ENCODE measurements at regions of chr2 and their contacts with region 1.

Region 1: DNA sequence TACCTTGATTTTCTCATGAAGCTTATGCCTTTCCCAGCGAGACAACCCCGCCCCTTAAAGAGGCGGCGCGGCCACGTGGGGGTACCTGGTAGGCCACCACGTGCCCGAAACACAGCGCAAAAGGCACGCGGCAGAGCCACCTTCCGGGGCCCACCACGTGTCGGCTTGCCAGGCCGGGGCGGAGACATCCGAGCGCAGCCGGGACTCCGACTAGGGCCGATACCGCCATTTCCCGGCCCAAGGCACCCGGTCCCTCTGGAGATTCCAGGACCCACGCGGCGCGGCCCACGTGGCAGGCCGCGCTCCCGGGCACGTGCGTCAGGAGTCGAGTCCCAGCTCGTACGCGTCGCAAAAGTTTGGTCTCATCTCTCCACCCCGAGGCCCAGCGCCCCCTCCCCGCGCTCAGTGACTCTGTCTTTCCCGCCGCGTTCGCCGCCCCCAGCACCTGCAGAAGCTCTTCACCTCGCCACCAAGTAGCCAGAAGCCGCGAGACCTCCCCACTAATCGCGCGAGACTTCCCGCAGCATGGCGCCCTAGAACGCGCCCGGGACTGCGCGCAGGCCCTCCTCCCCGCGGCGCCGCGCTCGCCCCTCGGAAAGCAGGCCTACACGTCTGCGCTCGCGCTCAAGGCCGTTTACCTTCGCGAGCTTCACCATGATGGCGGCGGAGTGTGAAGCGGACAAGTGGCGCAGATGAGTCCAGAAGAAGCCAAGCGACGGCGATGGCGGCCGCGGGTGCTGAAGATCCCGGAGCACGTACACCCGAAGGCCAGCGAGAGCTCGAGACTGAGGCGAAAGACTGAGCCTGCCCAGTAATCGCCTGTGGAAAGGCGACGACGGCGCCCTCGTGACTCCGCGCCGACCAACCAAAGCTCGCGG is at the start of gene NCL:
- DNase-seq: peak; percentile 92
- ATAC-seq: peak; percentile 94
- H3K4me3 Mint-ChIP-seq: peak within 1 kb of the TSS; percentile 97
- H3K27ac Mint-ChIP-seq: peak within 1 kb of the TSS; percentile 100
- H3K4me1 Mint-ChIP-seq: peaks cover 46% of the 10 kb centered on the region
- H3K27me3 Mint-ChIP-seq: no peaks in the 10 kb centered on the region
- total RNA-seq, gene NCL: 665 to 686 TPM

Region 2: GRCh38 chr2:231452799-231453508 is 11.0 kb before region 1 on chr2:
- CTCF ChIA-PET with region 1: interaction called, 37 read pairs
- POLR2A ChIA-PET with region 1: interaction called, 62 read pairs
- DNase-seq: no peak
- ATAC-seq: no peak
- H3K4me3 Mint-ChIP-seq: no peak overlapping the region
- H3K27ac Mint-ChIP-seq: peak overlapping the region; percentile 39
- H3K4me1 Mint-ChIP-seq: peaks cover 16% of the 10 kb centered on the region
- H3K27me3 Mint-ChIP-seq: no peaks in the 10 kb centered on the region

Region 3: DNA sequence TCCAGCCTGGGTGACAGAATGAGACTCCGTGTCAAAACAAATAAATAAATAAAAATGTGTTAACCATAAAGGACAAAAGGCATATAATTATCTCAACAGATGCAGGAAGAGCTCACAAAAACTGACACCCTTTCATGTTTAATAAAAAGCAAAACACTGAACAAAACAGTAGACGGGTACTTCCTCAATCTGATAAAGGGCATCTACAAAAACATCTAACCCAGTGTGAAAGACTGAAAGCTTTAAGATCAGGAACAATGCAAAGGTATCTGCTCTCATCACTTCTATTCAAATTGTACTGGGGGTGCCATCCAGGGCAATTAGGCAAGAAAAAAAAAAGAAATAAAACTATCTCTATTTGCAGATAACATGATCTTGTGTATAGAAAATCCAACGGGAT is 12.0 kb after region 1 on chr2:
- CTCF ChIA-PET with region 1: interaction called, 107 read pairs
- POLR2A ChIA-PET with region 1: interaction called, 54 read pairs
- DNase-seq: no peak
- ATAC-seq: no peak
- H3K4me3 Mint-ChIP-seq: no peak overlapping the region
- H3K27ac Mint-ChIP-seq: no peak overlapping the region
- H3K4me1 Mint-ChIP-seq: peaks cover 3% of the 10 kb centered on the region
- H3K27me3 Mint-ChIP-seq: peaks cover 2% of the 10 kb centered on the region

Region 4: GRCh38 chr2:231482806-231483391 is 19.0 kb after region 1 on chr2:
- CTCF ChIA-PET with region 1: interaction called, 107 read pairs
- POLR2A ChIA-PET with region 1: interaction called, 54 read pairs
- DNase-seq: peak; percentile 77
- ATAC-seq: peak; percentile 90
- H3K4me3 Mint-ChIP-seq: peak overlapping the region; percentile 75
- H3K27ac Mint-ChIP-seq: peak overlapping the region; percentile 88
- H3K4me1 Mint-ChIP-seq: peaks cover 20% of the 10 kb centered on the region
- H3K27me3 Mint-ChIP-seq: peaks cover 5% of the 10 kb centered on the region

Region 5: DNA sequence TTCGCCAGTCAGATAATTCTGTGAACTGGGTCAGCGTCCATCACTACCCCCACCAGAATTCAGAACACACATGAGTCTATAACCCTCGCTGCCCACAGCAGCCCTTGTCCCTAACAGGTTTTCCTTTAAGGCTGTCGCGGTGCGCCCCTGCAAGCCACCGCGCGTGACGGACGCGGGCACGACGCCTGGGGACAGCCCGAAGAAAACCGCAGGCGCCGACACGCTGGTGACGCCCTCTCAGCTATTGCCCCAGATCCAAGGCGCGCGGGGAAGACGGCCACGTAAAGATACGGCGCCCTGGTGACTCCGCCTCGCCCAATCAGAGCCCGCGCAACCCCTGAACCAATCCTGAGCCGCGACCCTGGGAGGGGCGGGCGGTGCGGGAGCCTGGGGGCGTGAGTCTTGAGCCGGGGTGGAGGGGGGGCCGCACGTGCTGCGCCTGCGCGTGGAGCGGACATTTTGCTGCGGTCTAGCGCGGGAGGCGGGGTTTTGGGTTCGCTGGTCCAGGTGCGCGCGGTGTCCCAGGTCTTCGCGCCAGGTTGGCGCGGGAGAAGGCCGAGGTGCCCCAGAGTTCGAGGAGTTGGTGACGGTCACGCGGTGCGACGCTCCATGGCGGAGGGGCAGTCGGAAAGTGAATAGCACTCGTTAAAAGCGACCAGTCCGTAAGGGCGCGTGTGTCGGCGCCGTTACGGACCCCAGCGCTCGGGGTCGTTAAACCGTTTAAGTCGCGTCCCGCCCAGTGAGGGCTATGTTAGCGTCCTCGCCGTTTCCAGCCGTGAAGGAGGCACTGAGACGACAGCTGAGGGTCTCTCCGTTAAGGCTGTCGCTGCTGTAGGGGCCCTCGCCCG is 50.4 kb after region 1 on chr2:
- CTCF ChIA-PET with region 1: interaction called, 5 read pairs
- POLR2A ChIA-PET with region 1: interaction called, 15 read pairs
- DNase-seq: peak; percentile 98
- ATAC-seq: peak; percentile 100
- H3K4me3 Mint-ChIP-seq: peak overlapping the region; percentile 88
- H3K27ac Mint-ChIP-seq: peak overlapping the region; percentile 95
- H3K4me1 Mint-ChIP-seq: peaks cover 23% of the 10 kb centered on the region
- H3K27me3 Mint-ChIP-seq: peaks cover 12% of the 10 kb centered on the region

Region 6: DNA sequence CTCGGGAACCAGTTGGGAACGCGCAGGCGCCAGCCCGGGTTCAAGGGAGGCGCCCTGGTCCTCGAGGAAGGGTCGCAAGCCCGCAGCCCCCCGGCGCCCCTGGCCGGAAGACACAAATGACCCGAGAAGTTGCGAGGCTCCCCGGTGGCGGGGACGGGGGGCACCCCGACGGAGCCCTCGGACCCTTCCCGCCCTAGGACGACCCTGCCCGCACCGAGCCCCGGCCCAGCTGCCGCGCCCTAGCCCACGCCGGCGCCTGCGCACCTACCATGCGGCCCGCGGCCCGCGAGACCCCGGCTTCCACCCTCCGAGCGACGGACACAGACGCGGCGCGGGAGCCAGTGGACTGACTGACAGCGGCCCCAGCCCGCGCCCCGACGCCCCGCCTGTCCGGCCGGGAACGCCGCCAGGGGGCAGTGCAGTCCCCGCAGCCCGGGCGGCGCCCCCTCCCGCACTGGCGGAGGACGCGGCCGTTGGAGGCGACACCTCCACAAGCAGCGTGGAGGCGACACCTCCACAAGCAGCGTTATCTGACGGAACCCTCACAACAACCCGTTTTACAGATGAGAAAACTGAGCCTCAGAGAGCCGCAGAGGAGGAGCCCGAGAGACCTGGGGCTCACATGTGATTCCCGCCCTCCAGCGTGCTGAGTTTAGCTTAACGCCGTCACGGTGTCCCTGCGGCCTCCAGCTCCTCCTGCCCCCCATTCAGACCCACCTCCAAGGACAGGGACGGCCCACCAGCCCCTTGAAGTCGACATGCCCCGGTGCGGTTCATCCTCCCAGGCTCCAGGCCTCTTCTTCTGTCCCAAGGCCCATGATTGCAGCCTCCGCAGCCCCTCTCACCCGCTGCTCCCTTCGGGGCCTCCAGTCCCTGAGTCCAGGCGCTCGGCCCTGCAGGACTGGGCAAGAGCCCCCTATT is 66.4 kb after region 1 on chr2 and contains the start of gene NMUR1:
- CTCF ChIA-PET with region 1: no interaction called
- POLR2A ChIA-PET with region 1: no interaction called
- DNase-seq: peak; percentile 72
- ATAC-seq: peak; percentile 94
- H3K4me3 Mint-ChIP-seq: peak within 1 kb of the TSS; percentile 18
- H3K27ac Mint-ChIP-seq: peak within 1 kb of the TSS; percentile 43
- H3K4me1 Mint-ChIP-seq: peaks cover 27% of the 10 kb centered on the region
- H3K27me3 Mint-ChIP-seq: peaks cover 63% of the 10 kb centered on the region
- total RNA-seq, gene NMUR1: 0.95 to 0.99 TPM

Region 7: DNA sequence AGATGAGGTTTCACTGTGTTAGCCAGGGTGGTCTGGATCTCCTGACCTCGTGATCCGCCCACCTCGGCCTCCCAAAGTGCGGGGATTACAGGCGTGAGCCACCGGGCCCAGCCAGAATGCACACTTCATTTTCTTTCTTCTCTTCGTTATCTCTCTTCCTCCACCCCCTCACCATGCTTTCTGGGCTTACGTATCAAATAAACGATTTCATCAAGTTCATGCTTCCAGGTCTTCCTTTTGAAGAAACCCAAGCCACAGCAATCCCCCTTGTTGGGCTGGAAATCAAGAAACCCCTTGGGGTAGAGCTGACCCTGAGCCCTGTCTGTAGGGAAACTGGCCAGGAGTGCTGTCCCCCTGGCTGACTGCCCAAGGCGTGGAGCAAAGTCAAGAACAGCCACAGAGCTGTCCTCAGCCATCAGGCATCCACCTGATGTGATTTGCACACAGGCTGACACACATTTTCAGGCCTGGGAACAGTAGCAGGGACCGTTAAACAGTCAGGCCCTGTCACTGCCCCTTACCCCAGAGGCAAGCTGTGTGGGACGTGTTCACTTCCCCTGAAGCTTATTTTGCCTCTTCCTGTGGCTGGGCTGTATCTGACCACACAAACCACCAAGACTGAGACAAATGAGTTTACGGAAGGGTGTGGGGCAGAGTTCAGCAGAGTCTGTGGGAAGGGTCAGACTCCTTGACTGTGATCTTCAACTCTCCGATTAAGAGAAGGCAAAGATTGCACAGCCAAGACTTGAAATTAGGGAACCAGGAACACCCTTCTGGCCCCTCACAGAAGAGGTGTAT is 81.4 kb after region 1 on chr2:
- CTCF ChIA-PET with region 1: no interaction called
- POLR2A ChIA-PET with region 1: interaction called, 10 read pairs
- DNase-seq: peak; percentile 88
- ATAC-seq: peak; percentile 92
- H3K4me3 Mint-ChIP-seq: peak overlapping the region; percentile 57
- H3K27ac Mint-ChIP-seq: peak overlapping the region; percentile 90
- H3K4me1 Mint-ChIP-seq: peaks cover 39% of the 10 kb centered on the region
- H3K27me3 Mint-ChIP-seq: peaks cover 18% of the 10 kb centered on the region

Region 8: GRCh38 chr2:231706731-231707624 is 243.0 kb after region 1 on chr2:
- CTCF ChIA-PET with region 1: interaction called, 5 read pairs
- POLR2A ChIA-PET with region 1: interaction called, 15 read pairs
- DNase-seq: peak; percentile 98
- ATAC-seq: peak; percentile 38
- H3K4me3 Mint-ChIP-seq: peak overlapping the region; percentile 97
- H3K27ac Mint-ChIP-seq: peak overlapping the region; percentile 100
- H3K4me1 Mint-ChIP-seq: peaks cover 22% of the 10 kb centered on the region
- H3K27me3 Mint-ChIP-seq: no peaks in the 10 kb centered on the region

Measured in activated CD8-positive, alpha-beta T cell treated with anti-CD3 and anti-CD28 coated beads, Interleukin-2, amount 10 ng/mL, durations not matched to agents 7 days and 5 days (primary cell).